ENCODE measurements at regions of chr15 and their contacts with region 1.

Region 1: DNA sequence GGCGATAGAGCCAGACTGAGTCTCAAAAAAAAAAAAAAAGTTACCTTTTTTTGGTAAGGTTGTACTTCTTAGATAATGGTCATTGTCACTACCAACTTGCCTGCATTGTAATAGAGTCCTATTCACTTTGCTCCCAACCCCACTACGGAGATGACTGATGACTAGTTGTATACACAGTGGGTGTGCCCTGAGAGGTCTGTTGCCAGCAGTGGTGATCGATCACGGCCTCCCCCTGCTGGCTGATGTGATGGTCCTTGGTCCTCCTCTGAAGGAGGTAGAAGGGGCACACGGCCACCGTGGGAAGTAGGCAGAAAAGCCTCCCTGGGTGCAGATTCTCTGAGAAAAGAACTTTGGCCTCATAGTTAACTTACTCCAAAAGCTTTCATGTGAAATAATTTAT is 10.7 kb downstream of the GCNT3 start:
- DNase-seq: no peak
- ATAC-seq: peak; percentile 97
- H3K4me3 ChIP-seq: no peak overlapping the region
- H3K27ac ChIP-seq: no peak overlapping the region
- H3K4me1 ChIP-seq: no peaks in the 10 kb centered on the region
- H3K27me3 ChIP-seq: no peaks in the 10 kb centered on the region
- CTCF ChIP-seq: peak; percentile 54 to 74 (median 64)
- EP300 ChIP-seq: no peak
- POLR2A ChIP-seq: no peak
- RAD21 ChIP-seq: peak; percentile 52

Region 2: GRCh38 chr15:59543721-59544547 is 78.4 kb before region 1 on chr15:
- CTCF ChIA-PET with region 1: interaction called, 5 read pairs
- POLR2A ChIA-PET with region 1: no interaction called
- RAD21 ChIA-PET with region 1: no interaction called
- SMC1A ChIA-PET with region 1: no interaction called
- in situ Hi-C with region 1: loop called (anchors 5 kb)
- intact Hi-C with region 1: no loop called
- DNase-seq: peak; percentile 78
- ATAC-seq: peak; percentile 93
- H3K4me3 ChIP-seq: peak overlapping the region; percentile 22; the same call in 1 of the 2 replicates
- H3K27ac ChIP-seq: peak overlapping the region; percentile 73
- H3K4me1 ChIP-seq: peaks cover 24% of the 10 kb centered on the region
- H3K27me3 ChIP-seq: no peaks in the 10 kb centered on the region
- CTCF ChIP-seq: no peak
- EP300 ChIP-seq: no peak
- POLR2A ChIP-seq: no peak
- RAD21 ChIP-seq: no peak

Region 3: DNA sequence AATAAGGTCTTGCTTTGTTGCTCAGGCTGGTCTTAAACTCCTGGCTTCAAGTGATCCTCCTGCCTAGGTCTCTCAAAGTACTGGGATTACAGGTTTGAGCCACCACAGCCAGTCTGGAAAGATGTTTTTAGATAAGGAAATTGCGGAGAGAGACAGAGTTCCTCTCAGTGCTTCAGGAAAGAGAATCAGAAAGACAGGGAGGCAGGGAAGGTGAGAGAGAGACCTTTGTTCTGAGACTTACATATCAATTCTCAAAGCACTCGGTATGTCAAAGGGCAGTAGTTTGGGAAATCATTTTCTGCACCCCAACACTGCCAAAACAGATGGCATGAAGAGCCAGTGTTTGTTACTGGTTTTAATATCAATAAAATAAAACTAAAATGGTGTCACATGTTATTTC is 23.8 kb before region 1 on chr15:
- CTCF ChIA-PET with region 1: no interaction called
- POLR2A ChIA-PET with region 1: no interaction called
- RAD21 ChIA-PET with region 1: no interaction called
- SMC1A ChIA-PET with region 1: no interaction called
- in situ Hi-C with region 1: no loop called
- intact Hi-C with region 1: no loop called
- DNase-seq: no peak
- ATAC-seq: no peak
- H3K4me3 ChIP-seq: no peak overlapping the region
- H3K27ac ChIP-seq: no peak overlapping the region
- H3K4me1 ChIP-seq: no peaks in the 10 kb centered on the region
- H3K27me3 ChIP-seq: no peaks in the 10 kb centered on the region
- CTCF ChIP-seq: no peak
- EP300 ChIP-seq: no peak
- POLR2A ChIP-seq: no peak
- RAD21 ChIP-seq: no peak

Region 4: GRCh38 chr15:59779110-59779509 is 156.8 kb after region 1 on chr15:
- CTCF ChIA-PET with region 1: no interaction called
- POLR2A ChIA-PET with region 1: no interaction called
- RAD21 ChIA-PET with region 1: no interaction called
- SMC1A ChIA-PET with region 1: no interaction called
- in situ Hi-C with region 1: no loop called
- intact Hi-C with region 1: no loop called
- DNase-seq: no peak
- ATAC-seq: no peak
- H3K4me3 ChIP-seq: no peak overlapping the region
- H3K27ac ChIP-seq: no peak overlapping the region
- H3K4me1 ChIP-seq: no peaks in the 10 kb centered on the region
- H3K27me3 ChIP-seq: no peaks in the 10 kb centered on the region; a peak in 1 of 4 replicates
- CTCF ChIP-seq: no peak
- EP300 ChIP-seq: no peak
- POLR2A ChIP-seq: no peak
- RAD21 ChIP-seq: no peak

Measured in GM12878 (cell line).